ENCODE measurements at regions of chr9 and their contacts with region 1.

Region 1: DNA sequence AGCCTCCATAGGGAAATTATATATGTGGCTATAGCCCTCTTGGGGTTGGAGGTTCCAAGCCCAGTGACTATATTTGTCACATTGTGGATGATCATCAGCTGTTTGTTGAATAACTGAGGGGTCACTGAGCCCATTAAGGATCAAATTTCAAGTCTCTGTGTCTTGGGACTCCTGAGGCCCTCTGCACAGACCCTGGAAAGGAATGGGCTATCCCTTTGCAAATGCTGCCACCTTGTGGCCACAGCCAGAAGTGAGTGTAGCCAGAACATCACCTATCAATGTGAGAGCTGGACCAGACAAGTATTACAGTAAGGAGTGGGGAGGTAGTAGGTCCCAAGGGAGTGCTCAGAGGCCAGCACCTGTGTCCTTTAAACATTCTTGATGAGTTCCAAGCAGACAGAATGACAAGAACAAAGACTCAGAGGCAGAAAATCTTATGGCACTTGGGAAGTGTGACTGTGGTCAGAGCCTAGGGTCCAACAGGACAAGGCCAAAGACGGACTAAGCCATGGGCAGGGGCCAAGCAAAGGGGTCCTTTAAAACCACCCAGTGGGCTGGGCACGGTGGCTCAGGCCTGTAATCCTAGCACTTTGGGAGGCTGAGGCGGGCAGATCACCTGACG is 8.2 kb downstream of the RPP25L start:
- DNase-seq: peak; percentile 96
- ATAC-seq: peak; percentile 93
- H3K4me3 Mint-ChIP-seq: no peak overlapping the region
- H3K27ac Mint-ChIP-seq: no peak overlapping the region
- H3K4me1 Mint-ChIP-seq: peaks cover 9% of the 10 kb centered on the region
- H3K27me3 Mint-ChIP-seq: no peaks in the 10 kb centered on the region; the same call in 1 of the 2 replicates
- CTCF ChIP-seq: peak; percentile 94

Region 2: DNA sequence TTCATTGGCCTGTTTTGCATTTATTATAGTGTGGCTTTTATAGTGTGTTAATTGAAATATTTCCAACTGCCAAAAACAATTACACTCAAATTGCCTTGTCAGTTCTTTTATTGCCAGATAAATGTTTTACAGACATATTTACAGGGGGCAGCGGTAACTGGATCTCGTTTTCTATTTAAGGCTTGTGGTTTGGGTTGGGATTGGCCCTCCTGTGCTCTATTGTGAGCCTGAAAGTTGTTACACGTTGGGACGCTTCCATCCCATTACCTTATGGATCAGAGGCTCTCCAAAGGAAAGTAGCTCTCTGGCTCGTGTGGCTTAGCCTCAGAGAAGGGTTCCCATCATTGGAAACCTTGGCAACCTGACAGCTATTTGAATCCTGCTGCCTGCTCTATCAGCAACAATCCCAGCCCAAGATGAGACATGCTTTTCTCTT is 124.3 kb before region 1 on chr9:
- CTCF ChIA-PET with region 1: no interaction called
- POLR2A ChIA-PET with region 1: no interaction called
- DNase-seq: no peak
- ATAC-seq: no peak
- H3K4me3 Mint-ChIP-seq: no peak overlapping the region
- H3K27ac Mint-ChIP-seq: no peak overlapping the region
- H3K4me1 Mint-ChIP-seq: no peaks in the 10 kb centered on the region
- H3K27me3 Mint-ChIP-seq: peaks cover 6% of the 10 kb centered on the region; the same call in 1 of the 2 replicates
- CTCF ChIP-seq: no peak

Region 3: DNA sequence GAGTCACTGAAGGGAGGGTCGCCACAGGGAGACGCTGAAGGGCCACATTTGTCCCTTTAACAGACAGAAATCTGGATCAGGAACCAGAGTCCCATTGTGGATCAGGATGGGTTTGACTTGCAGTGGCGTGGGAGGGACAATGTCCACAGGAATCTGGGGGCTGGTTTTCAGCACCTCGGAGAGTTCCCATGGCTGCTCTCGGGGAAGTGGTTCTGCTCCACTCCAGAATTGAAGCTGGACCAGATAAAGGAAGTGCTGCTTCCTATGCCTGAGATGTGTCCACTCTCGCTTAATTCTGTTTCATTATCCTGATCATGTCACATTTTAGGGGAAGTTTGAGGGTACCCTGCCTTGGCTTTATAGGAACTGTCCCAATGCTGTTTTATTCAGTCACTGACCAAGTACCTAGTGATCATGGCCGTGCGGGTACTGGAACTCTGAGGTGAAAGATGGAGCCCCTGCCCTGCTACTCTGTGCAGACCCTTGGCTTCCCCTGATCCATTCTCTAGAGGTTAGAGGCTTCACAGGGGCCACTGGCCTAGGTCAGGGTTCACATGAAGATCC is 109.7 kb before region 1 on chr9:
- CTCF ChIA-PET with region 1: interaction called, 14 read pairs
- POLR2A ChIA-PET with region 1: no interaction called
- DNase-seq: peak; percentile 78
- ATAC-seq: peak; percentile 76
- H3K4me3 Mint-ChIP-seq: no peak overlapping the region
- H3K27ac Mint-ChIP-seq: no peak overlapping the region
- H3K4me1 Mint-ChIP-seq: peaks cover 4% of the 10 kb centered on the region; the same call in 1 of the 2 replicates
- H3K27me3 Mint-ChIP-seq: no peaks in the 10 kb centered on the region
- CTCF ChIP-seq: no peak

Region 4: DNA sequence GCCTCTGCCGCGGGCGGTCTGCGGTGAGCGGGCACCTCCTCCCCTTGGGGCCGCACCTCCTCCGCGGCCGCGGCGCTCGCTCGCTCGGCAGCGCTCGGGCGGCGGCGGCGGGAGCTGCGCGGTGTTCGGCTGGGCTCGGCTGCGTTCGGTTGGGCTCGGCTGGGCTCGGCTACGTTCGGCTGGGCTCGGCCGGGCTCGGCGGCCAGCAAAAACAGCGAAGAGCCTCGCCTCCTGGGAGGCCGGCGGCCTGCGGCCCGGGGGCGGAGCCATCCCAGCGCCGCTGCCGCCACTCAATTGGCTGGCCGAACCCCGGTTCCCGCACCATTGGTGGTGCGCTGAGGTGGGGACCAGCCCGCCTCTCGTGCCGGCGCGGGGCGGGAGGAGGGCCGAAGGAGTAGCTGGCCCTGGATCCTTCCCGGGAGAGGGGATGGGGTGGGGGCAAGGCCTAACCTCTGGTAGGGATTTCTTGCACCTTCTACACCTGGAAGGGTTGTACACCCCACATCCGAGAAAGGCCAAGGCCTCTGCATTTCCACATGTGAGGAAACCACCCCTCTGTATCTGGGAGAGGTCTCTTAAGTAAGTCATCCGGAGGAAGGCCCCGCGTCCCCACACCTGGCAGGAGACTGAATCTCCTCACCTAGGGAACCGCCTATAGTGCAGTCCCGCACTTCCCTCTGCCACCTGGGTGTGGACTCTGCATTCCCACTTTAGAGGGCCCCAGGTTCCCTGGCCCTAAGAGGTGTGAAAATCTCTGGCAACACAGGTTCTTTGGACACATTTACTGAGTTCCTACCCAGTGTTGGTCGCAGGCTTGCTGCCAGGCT is 80.5 kb before region 1 on chr9 and contains the start of gene ENHO:
- CTCF ChIA-PET with region 1: interaction called, 16 read pairs
- POLR2A ChIA-PET with region 1: no interaction called
- DNase-seq: peak; percentile 94
- ATAC-seq: peak; percentile 97
- H3K4me3 Mint-ChIP-seq: peak within 1 kb of the TSS; percentile 86
- H3K27ac Mint-ChIP-seq: no peak within 1 kb of the TSS; the same call in 1 of the 2 replicates
- H3K4me1 Mint-ChIP-seq: peaks cover 20% of the 10 kb centered on the region
- H3K27me3 Mint-ChIP-seq: peaks cover 44% of the 10 kb centered on the region
- CTCF ChIP-seq: no peak
- total RNA-seq, gene ENHO: 26.9 to 28.3 TPM (median 27.9 TPM) in 3 replicates

Region 5: GRCh38 chr9:34559624-34560452 is 43.9 kb before region 1 on chr9:
- CTCF ChIA-PET with region 1: interaction called, 16 read pairs
- POLR2A ChIA-PET with region 1: no interaction called
- DNase-seq: no peak
- ATAC-seq: peak; percentile 27
- H3K4me3 Mint-ChIP-seq: no peak overlapping the region
- H3K27ac Mint-ChIP-seq: peak overlapping the region; percentile 33; the same call in 1 of the 2 replicates
- H3K4me1 Mint-ChIP-seq: peaks cover 37% of the 10 kb centered on the region
- H3K27me3 Mint-ChIP-seq: peaks cover 4% of the 10 kb centered on the region
- CTCF ChIP-seq: no peak

Region 6: GRCh38 chr9:34591248-34591916 is 12.3 kb before region 1 on chr9:
- CTCF ChIA-PET with region 1: interaction called, 96 read pairs
- POLR2A ChIA-PET with region 1: interaction called, 3 read pairs
- DNase-seq: peak; percentile 93
- ATAC-seq: peak; percentile 64
- H3K4me3 Mint-ChIP-seq: peak overlapping the region; percentile 78
- H3K27ac Mint-ChIP-seq: no peak overlapping the region
- H3K4me1 Mint-ChIP-seq: peaks cover 32% of the 10 kb centered on the region
- H3K27me3 Mint-ChIP-seq: peaks cover 79% of the 10 kb centered on the region
- CTCF ChIP-seq: peak; percentile 89

Region 7: GRCh38 chr9:34637356-34638137 is 33.8 kb after region 1 on chr9 and contains the start of gene SIGMAR1:
- CTCF ChIA-PET with region 1: interaction called, 25 read pairs
- POLR2A ChIA-PET with region 1: no interaction called
- DNase-seq: peak; percentile 95
- ATAC-seq: peak; percentile 89
- H3K4me3 Mint-ChIP-seq: peak within 1 kb of the TSS; percentile 83
- H3K27ac Mint-ChIP-seq: peak within 1 kb of the TSS; percentile 3
- H3K4me1 Mint-ChIP-seq: peaks cover 22% of the 10 kb centered on the region
- H3K27me3 Mint-ChIP-seq: peaks cover 11% of the 10 kb centered on the region
- CTCF ChIP-seq: no peak
- total RNA-seq, gene SIGMAR1: 108 to 116 TPM (median 109 TPM) in 3 replicates